Activated CD4-positive, alpha-beta T cell treated with anti-CD3 and anti-CD28 coated beads for 36 hours (primary cell): ENCODE measurements at regions of chr6 and their contacts with region 1.

Region 1: DNA sequence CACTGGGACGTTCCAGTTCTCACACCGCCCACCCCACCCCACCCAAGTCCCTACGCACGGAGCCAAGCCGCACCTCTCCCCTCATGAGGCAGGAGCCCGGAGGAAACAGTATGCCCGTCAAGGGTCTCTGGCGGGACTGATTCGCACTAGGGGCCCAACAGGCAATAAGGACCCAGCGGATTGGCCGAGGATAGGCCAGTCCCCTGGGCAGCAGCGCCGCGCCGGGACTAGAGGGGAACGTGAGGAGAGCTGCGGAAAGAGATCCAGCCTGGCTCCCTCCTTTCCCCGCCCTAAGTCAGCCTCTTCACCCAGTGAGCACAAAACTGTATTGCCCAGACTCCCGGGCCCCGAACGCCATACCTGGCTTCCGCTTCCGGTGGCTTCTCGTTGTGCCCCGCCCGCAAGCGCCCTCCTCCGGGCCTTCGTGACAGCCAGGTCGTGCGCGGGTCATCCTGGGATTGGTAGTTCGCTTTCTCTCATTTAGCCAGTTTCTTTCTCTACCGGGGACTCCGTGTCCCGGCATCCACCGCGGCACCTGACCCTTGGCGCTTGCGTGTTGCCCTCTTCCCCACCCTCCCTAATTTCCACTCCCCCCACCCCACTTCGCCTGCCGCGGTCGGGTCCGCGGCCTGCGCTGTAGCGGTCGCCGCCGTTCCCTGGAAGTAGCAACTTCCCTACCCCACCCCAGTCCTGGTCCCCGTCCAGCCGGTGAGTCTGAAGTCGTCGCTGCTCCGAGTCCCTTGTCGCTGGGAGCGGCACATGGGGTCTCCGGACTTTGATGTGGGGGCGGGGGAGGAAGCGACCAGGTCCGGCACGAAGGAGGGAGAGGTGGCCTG is at the start of gene CSNK2B:
- DNase-seq: peak; percentile 99
- ATAC-seq: peak; percentile 89
- H3K4me3 Mint-ChIP-seq: peak within 1 kb of the TSS; percentile 99
- H3K27ac Mint-ChIP-seq: peak within 1 kb of the TSS; percentile 99
- H3K4me1 Mint-ChIP-seq: peaks cover 66% of the 10 kb centered on the region
- H3K27me3 Mint-ChIP-seq: no peaks in the 10 kb centered on the region
- total RNA-seq, gene CSNK2B: 239 to 346 TPM

Region 2: GRCh38 chr6:31474871-31475286 is 190.8 kb before region 1 on chr6:
- CTCF ChIA-PET with region 1: no interaction called
- POLR2A ChIA-PET with region 1: no interaction called
- intact Hi-C with region 1: no loop called
- DNase-seq: peak; percentile 56
- ATAC-seq: peak; percentile 29
- H3K4me3 Mint-ChIP-seq: no peak overlapping the region
- H3K27ac Mint-ChIP-seq: no peak overlapping the region
- H3K4me1 Mint-ChIP-seq: peaks cover 49% of the 10 kb centered on the region
- H3K27me3 Mint-ChIP-seq: no peaks in the 10 kb centered on the region

Region 3: GRCh38 chr6:31493875-31494694 is 171.6 kb before region 1 on chr6:
- CTCF ChIA-PET with region 1: interaction called, 3 read pairs
- POLR2A ChIA-PET with region 1: no interaction called
- intact Hi-C with region 1: loop called in 1 of 2 experiments (anchors 1 kb)
- DNase-seq: peak; percentile 91
- ATAC-seq: peak; percentile 58
- H3K4me3 Mint-ChIP-seq: peak overlapping the region; percentile 79
- H3K27ac Mint-ChIP-seq: peak overlapping the region; percentile 90
- H3K4me1 Mint-ChIP-seq: peaks cover 43% of the 10 kb centered on the region
- H3K27me3 Mint-ChIP-seq: no peaks in the 10 kb centered on the region

Region 4: GRCh38 chr6:31652925-31653718 is 12.6 kb before region 1 on chr6:
- CTCF ChIA-PET with region 1: interaction called, 39 read pairs
- POLR2A ChIA-PET with region 1: interaction called, 72 read pairs
- intact Hi-C with region 1: loop called (anchors 1 kb)
- DNase-seq: peak; percentile 91
- ATAC-seq: peak; percentile 71
- H3K4me3 Mint-ChIP-seq: peak overlapping the region; percentile 88
- H3K27ac Mint-ChIP-seq: peak overlapping the region; percentile 96
- H3K4me1 Mint-ChIP-seq: peaks cover 38% of the 10 kb centered on the region
- H3K27me3 Mint-ChIP-seq: no peaks in the 10 kb centered on the region

Region 5: DNA sequence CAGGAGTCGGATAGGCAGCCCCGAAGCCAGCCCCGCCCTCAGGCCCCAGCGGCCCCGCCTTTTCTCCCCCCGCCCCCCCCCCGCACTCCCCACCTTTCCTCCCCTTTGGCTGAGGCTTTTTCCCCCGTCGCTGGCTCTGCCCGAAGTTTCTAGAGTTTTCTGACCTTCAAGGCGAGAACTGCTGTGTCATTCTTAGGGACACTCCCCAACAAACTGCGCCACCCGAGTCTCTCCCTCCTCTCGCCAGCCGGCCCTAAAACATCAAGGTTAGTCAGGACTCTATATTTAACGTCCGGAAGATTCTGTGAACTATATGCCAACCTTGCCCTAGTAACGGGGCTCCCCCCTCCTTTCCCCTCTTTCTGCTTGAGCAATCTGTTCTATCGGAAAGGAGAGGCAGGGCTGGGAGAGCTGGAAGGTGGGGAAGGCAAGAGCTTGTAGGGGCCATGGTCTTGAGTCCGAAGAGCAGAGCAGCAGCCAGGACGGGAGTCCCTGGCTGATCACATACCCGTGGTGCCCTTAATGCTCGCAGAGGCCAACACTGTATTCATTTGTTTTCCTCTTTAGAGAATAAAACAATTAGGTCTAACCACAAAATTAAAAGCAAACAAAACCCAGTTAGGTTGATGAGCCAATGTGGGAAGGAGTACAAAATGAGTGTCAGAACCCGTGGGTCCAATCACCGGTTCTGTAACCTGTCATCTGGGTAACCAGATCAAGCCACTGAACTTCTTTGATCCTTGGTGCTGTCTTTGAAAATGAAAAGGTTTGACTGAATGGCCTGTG is 156.5 kb after region 1 on chr6:
- CTCF ChIA-PET with region 1: interaction called, 4 read pairs
- POLR2A ChIA-PET with region 1: interaction called, 4 read pairs
- intact Hi-C with region 1: loop called (anchors 1 to 5 kb)
- DNase-seq: peak; percentile 79
- ATAC-seq: peak; percentile 54
- H3K4me3 Mint-ChIP-seq: peak overlapping the region; percentile 89
- H3K27ac Mint-ChIP-seq: peak overlapping the region; percentile 97
- H3K4me1 Mint-ChIP-seq: peaks cover 67% of the 10 kb centered on the region
- H3K27me3 Mint-ChIP-seq: no peaks in the 10 kb centered on the region

Region 6: DNA sequence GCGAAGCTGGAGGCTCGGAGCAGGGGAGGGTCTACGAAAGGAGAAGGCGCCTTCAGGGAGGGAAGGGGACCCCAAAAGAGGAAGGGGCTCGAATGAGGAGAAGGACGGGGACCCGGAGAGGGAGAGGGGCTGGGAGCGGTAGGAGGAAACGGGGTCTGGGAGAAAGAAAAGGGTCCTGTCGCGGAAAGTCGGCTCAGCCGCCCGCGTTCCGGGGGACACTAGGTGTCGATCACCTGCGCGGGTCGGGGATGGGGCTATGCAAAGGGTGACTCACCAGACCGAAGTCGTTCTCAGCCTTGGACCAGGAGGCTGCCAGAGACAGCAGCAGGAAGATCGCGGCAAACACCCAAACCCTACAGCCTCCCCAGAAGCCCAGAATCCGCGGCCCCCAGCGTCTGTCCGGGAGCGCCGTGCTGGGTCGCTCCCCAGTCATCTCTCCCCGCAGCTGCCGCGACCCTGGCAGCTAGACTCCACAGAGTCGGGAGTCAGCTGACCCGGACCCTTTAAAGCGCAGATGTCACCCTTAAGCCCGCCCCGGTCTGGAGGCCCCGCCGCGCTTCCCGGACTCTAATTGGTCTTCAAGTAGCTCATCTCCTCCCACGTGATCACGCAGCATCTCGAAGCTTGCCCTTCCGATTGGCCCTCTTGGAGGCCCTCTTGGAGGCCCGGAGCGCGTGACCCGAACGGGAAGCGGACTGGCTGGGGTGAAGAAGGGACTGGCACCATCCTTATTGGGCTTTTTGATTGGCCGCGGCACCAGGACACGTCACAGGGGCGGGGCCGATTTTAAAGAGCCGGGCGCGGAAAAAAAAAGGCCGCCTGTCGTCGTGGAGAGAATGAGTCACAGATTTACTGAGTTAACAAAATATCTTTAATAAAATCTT is 196.9 kb after region 1 on chr6 and contains the start of gene NEU1:
- CTCF ChIA-PET with region 1: interaction called, 6 read pairs
- POLR2A ChIA-PET with region 1: interaction called, 12 read pairs
- intact Hi-C with region 1: loop called in 1 of 2 experiments (anchors 1 kb)
- DNase-seq: peak; percentile 100
- ATAC-seq: peak; percentile 98
- H3K4me3 Mint-ChIP-seq: peak within 1 kb of the TSS; percentile 90
- H3K27ac Mint-ChIP-seq: peak within 1 kb of the TSS; percentile 91
- H3K4me1 Mint-ChIP-seq: peaks cover 27% of the 10 kb centered on the region
- H3K27me3 Mint-ChIP-seq: no peaks in the 10 kb centered on the region
- total RNA-seq, gene NEU1: 11.6 to 11.8 TPM

Region 7: DNA sequence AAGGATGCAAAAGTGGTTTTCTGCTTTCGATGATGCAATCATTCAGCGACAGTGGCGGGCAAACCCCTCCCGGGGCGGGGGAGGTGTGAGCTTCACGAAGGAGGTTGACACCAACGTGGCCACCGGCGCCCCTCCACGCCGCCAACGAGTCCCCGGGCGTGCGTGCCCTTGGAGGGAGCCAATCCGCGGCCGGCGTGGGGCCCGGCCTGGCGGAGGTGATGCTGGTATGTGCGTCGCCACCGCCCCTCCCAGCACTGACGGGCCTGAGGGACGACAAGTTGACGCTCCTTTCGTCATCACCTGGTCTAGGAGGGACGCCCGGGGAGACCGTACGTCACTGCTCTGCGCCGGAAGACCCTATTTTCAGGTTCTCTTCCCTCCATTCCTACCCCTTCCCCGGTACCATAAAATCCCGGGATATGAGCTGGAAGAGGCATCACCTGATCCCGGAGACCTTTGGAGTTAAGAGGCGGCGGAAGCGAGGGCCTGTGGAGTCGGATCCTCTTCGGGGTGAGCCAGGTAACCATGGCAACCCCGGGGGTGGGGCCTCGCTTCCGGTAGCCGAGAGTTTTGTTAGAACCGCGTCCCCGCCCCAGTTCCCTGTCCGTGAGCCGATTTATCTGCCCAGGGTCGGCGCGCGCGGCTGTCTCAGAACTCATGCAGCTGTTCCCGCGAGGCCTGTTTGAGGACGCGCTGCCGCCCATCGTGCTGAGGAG is 306.4 kb after region 1 on chr6 and contains the start of gene DXO:
- CTCF ChIA-PET with region 1: no interaction called
- POLR2A ChIA-PET with region 1: interaction called, 8 read pairs
- intact Hi-C with region 1: loop called in 1 of 2 experiments (anchors 1 kb)
- DNase-seq: peak; percentile 99
- ATAC-seq: peak; percentile 96
- H3K4me3 Mint-ChIP-seq: peak within 1 kb of the TSS; percentile 96
- H3K27ac Mint-ChIP-seq: peak within 1 kb of the TSS; percentile 99
- H3K4me1 Mint-ChIP-seq: peaks cover 43% of the 10 kb centered on the region
- H3K27me3 Mint-ChIP-seq: no peaks in the 10 kb centered on the region
- total RNA-seq, gene DXO: 12.6 to 13.9 TPM